Naive thymus-derived CD4-positive, alpha-beta T cell (primary cell): ENCODE measurements at regions of chrX and their contacts with region 1.

Region 1: DNA sequence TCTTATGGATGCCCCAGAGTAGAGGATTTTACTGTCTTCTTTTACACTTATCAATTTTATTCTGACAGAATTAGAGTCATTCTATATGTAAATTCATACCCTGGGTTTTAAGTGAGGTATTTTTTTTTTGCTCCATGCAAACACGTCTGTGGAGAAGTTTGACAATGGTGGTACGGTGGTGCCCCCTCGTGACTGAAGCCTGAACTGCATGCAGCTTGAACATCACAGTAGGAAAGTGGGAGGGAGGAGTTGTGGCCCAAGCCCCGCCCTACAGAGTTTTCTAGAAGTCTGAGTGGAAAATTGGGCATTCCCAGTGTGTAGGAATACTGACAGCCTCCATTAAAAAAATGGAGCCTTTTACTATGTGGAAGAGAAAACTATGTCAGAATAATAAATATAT is 73.3 kb upstream of the RAB40AL start:
- DNase-seq: peak; percentile 57 to 82 (median 70)
- ATAC-seq: peak; percentile 99
- H3K4me3 ChIP-seq: no peak overlapping the region
- H3K4me3 Mint-ChIP-seq: no peak overlapping the region
- H3K27ac ChIP-seq: no peak overlapping the region
- H3K27ac Mint-ChIP-seq: no peak overlapping the region
- H3K4me1 ChIP-seq: no peaks in the 10 kb centered on the region
- H3K4me1 Mint-ChIP-seq: no peaks in the 10 kb centered on the region
- H3K27me3 ChIP-seq: no peaks in the 10 kb centered on the region
- H3K27me3 Mint-ChIP-seq: no peaks in the 10 kb centered on the region

Region 2: GRCh38 chrX:102067966-102068708 is 795.6 kb before region 1 on chrX:
- CTCF ChIA-PET with region 1: no interaction called
- POLR2A ChIA-PET with region 1: no interaction called
- intact Hi-C with region 1: loop called in 1 of 2 experiments (anchors 1 kb)
- DNase-seq: peak in 5 of 9 donors; percentile 4 to 30 (median 17)
- ATAC-seq: no peak
- H3K4me3 ChIP-seq: no peak overlapping the region
- H3K4me3 Mint-ChIP-seq: no peak overlapping the region
- H3K27ac ChIP-seq: no peak overlapping the region
- H3K27ac Mint-ChIP-seq: no peak overlapping the region
- H3K4me1 ChIP-seq: no peaks in the 10 kb centered on the region
- H3K4me1 Mint-ChIP-seq: no peaks in the 10 kb centered on the region
- H3K27me3 ChIP-seq: no peaks in the 10 kb centered on the region
- H3K27me3 Mint-ChIP-seq: peaks cover 0 to 18% (median 9%) of the 10 kb centered on the region in 5 donors

Region 3: GRCh38 chrX:102129473-102129872 is 734.3 kb before region 1 on chrX:
- CTCF ChIA-PET with region 1: no interaction called
- POLR2A ChIA-PET with region 1: no interaction called
- intact Hi-C with region 1: loop called in 1 of 2 experiments (anchors 1 kb)
- DNase-seq: no peak
- ATAC-seq: no peak
- H3K4me3 ChIP-seq: no peak overlapping the region
- H3K4me3 Mint-ChIP-seq: no peak overlapping the region
- H3K27ac ChIP-seq: no peak overlapping the region
- H3K27ac Mint-ChIP-seq: no peak overlapping the region
- H3K4me1 ChIP-seq: no peaks in the 10 kb centered on the region
- H3K4me1 Mint-ChIP-seq: peaks cover 0 to 9% (median 5%) of the 10 kb centered on the region in 7 donors
- H3K27me3 ChIP-seq: no peaks in the 10 kb centered on the region
- H3K27me3 Mint-ChIP-seq: peaks cover 18 to 39% (median 31%) of the 10 kb centered on the region in 5 donors

Region 4: GRCh38 chrX:102643275-102643674 is 220.5 kb before region 1 on chrX:
- CTCF ChIA-PET with region 1: no interaction called
- POLR2A ChIA-PET with region 1: no interaction called
- intact Hi-C with region 1: loop called in 1 of 2 experiments (anchors 2 kb)
- DNase-seq: no peak
- ATAC-seq: no peak
- H3K4me3 ChIP-seq: no peak overlapping the region
- H3K4me3 Mint-ChIP-seq: no peak overlapping the region
- H3K27ac ChIP-seq: no peak overlapping the region
- H3K27ac Mint-ChIP-seq: no peak overlapping the region
- H3K4me1 ChIP-seq: no peaks in the 10 kb centered on the region
- H3K4me1 Mint-ChIP-seq: peaks cover 0 to 5% (median 0%) of the 10 kb centered on the region in 7 donors
- H3K27me3 ChIP-seq: no peaks in the 10 kb centered on the region
- H3K27me3 Mint-ChIP-seq: no peaks in the 10 kb centered on the region

Region 5: DNA sequence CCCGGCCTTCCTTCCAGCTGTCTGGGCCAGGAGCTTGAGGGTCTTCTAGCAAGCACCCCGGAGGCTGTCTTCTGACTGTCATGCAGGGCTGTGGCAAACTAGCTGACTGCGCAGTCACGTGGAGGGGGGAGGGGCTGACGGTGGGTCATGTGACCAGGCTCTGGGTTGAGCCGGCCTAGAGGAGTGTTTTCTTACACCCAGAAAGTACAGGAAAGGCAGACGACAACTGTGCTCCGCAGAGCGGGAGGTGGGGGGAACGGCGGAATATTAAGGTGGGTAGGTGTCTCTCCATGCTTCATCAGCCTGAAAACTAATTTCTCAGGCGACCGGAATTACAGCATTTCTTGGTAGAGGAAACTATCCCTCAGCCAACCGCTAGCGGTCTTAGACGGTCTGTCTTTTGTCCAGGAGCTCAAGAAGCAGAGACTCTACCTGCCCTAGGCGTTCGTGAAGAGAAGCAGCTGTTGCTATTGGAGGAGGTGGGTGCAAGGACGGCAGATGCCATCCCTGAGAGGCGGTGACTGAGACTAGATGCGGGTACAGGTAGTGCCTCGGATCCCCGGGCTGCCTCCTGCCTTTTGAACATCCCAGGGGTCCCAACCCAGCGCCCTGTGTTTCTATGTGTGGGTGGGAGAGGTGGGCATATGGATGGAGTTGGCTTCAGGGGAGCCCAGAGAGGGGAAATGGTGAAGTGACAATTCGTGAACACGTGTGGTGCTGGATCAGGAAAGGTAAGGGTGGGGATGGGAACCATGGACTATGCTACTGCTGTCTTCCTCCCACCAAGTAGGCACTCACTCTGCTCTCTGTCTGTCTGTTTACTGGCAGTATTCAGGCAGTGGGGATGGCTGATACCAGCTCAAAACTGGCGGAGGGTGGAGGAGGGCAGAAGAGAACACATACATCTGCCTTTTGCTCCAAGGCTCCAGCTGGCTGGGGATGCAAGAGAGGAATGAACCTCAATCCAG is 203.7 kb before region 1 on chrX:
- CTCF ChIA-PET with region 1: no interaction called
- POLR2A ChIA-PET with region 1: interaction called, 3 read pairs
- intact Hi-C with region 1: loop called in 1 of 2 experiments (anchors 5 kb)
- DNase-seq: peak; percentile 57 to 82 (median 78)
- ATAC-seq: peak; percentile 97
- H3K4me3 ChIP-seq: peak overlapping the region; percentile 58
- H3K4me3 Mint-ChIP-seq: peak overlapping the region; percentile 85 to 94 (median 91)
- H3K27ac ChIP-seq: peak overlapping the region; percentile 73
- H3K27ac Mint-ChIP-seq: peak overlapping the region; percentile 84 to 96 (median 89)
- H3K4me1 ChIP-seq: no peaks in the 10 kb centered on the region
- H3K4me1 Mint-ChIP-seq: peaks cover 17 to 46% (median 39%) of the 10 kb centered on the region in 7 donors
- H3K27me3 ChIP-seq: no peaks in the 10 kb centered on the region
- H3K27me3 Mint-ChIP-seq: peaks cover 0 to 7% (median 0%) of the 10 kb centered on the region in 5 donors

Region 6: DNA sequence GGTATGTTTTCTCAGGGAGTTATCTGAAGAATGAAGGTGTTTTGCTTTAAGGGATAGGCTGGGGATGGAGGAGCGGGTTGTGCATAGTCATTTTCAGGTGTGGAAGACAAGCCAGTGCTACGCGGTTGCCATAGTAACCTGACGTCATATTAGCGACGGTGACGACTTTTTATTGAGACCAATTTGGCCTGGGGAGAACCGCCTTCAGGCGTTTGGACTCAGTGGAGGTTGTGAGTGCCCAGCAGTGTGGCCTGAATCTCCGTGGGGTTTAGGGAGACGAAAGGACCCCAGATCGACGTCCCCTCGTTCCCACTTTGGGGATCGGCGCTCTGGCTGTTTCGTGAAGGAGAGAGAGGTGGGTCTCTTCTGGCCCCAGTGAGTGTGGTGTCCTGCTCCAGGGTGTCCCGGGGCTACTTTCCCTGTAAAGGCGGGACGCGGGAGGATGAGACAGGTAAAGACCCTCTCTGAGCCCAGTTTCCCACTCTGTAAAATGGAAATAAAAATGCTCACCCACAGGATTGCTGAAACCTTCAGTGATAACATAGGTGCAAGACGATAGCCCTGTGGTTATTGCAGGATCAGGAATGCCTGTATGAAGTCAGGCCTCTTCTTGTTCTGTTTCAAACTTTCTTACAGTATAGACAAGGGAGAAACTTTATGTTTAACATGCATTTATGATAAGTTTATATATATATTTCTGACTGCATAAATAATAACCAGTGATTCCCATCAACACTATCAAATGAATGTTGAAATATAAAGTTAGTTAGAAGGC is 94.6 kb before region 1 on chrX:
- CTCF ChIA-PET with region 1: no interaction called
- POLR2A ChIA-PET with region 1: no interaction called
- intact Hi-C with region 1: loop called in 1 of 2 experiments (anchors 5 kb)
- DNase-seq: peak; percentile 41 to 81 (median 72)
- ATAC-seq: peak; percentile 90
- H3K4me3 ChIP-seq: peak overlapping the region; percentile 79
- H3K4me3 Mint-ChIP-seq: peak overlapping the region; percentile 83 to 98 (median 96)
- H3K27ac ChIP-seq: peak overlapping the region; percentile 78
- H3K27ac Mint-ChIP-seq: peak overlapping the region; percentile 72 to 99 (median 97)
- H3K4me1 ChIP-seq: no peaks in the 10 kb centered on the region
- H3K4me1 Mint-ChIP-seq: peaks cover 0 to 19% (median 11%) of the 10 kb centered on the region in 7 donors
- H3K27me3 ChIP-seq: no peaks in the 10 kb centered on the region
- H3K27me3 Mint-ChIP-seq: no peaks in the 10 kb centered on the region

Region 7: DNA sequence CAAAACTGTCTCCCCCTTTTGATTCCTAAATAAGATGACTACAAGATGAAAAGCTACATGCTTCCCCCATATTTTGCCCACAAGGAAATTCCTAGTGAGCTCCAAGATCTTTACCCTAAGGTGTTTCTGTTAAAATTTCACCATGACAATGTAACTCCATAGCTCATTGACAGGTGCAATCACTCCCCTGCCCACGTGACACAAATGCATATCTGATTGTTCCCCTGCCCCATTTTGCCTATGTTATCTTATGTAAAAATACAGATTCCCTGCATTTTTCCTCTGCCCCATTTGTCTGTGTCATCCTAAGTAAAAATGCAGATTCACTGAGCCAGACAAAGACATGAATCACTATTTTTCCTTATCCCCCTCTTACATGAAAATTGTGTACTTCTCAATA is 76.5 kb before region 1 on chrX:
- CTCF ChIA-PET with region 1: no interaction called
- POLR2A ChIA-PET with region 1: no interaction called
- intact Hi-C with region 1: no loop called
- DNase-seq: no peak
- ATAC-seq: no peak
- H3K4me3 ChIP-seq: no peak overlapping the region
- H3K4me3 Mint-ChIP-seq: no peak overlapping the region
- H3K27ac ChIP-seq: no peak overlapping the region
- H3K27ac Mint-ChIP-seq: no peak overlapping the region
- H3K4me1 ChIP-seq: no peaks in the 10 kb centered on the region
- H3K4me1 Mint-ChIP-seq: peaks cover 0 to 4% (median 0%) of the 10 kb centered on the region in 7 donors
- H3K27me3 ChIP-seq: no peaks in the 10 kb centered on the region
- H3K27me3 Mint-ChIP-seq: no peaks in the 10 kb centered on the region

Region 8: DNA sequence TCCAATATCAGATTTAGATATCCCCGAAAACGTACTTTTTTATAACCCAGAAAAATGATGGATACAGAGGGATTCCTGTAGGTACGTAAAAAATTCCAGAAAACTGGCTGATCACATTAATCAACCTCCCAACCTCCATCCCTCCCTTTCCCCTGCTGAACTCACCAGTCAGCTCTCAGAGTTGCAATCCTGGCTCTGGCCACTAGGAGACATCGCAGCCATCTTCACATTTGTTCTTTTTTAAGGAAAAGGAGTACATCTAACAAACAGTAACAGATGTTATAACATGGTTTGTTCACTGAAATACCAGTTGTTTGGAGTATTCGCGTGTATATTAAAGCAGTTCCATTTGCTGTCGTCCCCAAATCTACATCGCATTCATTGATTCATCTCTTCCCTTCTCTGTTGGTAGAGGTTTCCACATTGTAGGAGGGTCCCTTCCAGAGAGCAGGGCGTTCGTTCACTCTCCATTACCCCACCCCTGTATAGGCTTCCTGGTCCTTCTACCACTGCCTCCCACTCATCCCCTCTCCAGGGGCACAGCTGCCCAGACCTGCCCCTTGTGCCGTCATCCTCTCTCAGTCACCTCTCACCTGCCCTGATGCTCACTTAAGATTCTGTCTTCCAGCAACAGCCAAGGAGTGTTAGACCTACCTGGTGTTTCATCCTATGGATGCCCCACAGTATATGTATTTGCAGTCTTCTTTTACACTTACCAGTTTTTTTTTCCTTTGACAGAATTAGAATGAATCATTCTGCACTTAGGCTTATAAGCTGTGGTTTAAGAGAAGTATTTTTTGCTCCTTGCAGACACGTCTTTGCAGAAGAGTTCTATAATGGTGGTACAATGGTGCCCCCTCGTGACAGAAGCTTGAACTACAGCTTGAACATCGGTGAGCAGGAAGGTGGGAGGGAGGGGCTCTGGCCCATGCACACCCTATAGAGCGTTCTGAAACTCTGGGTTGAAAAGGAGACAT is 36.5 kb after region 1 on chrX:
- CTCF ChIA-PET with region 1: no interaction called
- POLR2A ChIA-PET with region 1: no interaction called
- intact Hi-C with region 1: loop called (anchors 5 kb)
- DNase-seq: peak; percentile 25 to 75 (median 62)
- ATAC-seq: peak; percentile 90
- H3K4me3 ChIP-seq: no peak overlapping the region
- H3K4me3 Mint-ChIP-seq: peak overlapping the region in 7 of 10 donors; percentile 27 to 64 (median 49)
- H3K27ac ChIP-seq: no peak overlapping the region
- H3K27ac Mint-ChIP-seq: peak overlapping the region in 1 of 9 donors; percentile 22
- H3K4me1 ChIP-seq: no peaks in the 10 kb centered on the region
- H3K4me1 Mint-ChIP-seq: peaks cover 3 to 11% (median 5%) of the 10 kb centered on the region in 7 donors
- H3K27me3 ChIP-seq: no peaks in the 10 kb centered on the region
- H3K27me3 Mint-ChIP-seq: no peaks in the 10 kb centered on the region